Esophagus squamous epithelium (tissue), 5 donors: ENCODE measurements at regions of chr17 and their contacts with region 1.

Region 1: DNA sequence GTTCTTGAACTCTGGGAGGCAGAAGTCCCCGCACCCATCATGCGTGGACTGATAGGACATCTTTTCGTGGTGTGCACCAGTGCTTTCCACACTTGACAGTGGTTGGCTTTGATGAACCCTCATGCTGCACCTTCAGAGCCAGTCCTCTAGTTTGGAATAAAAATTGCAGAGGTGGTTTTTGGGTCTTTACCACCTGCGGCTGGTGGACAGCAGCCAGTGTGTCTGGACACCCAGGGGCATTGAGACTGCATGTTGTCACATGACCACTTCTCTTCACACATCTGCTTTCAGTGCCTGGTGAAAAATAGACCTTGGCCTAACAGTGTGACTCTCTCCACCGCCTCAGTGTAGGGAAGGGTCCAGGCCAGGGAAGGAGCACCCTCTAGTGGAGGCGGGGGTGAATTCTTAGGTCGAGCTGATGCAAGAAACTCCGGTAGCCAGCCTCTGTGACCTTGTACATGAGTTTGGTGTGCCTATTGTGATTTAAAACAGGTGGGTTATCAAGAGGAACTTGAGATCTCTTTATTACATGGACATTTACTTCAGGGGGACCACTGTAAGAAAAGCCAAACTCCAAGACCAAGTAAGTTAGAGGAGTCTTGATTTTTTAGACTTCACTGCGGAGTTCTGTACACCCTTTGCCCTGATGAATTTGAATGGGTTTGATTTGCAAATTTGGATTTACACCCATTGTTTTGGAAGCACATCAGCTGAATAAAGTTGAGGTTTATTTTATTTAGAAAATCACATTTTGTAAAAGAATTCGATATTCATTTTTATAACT is 17.9 kb downstream of the GOSR2 start:
- DNase-seq: peak; percentile 17
- H3K4me3 ChIP-seq: no peak overlapping the region
- H3K27ac ChIP-seq: no peak overlapping the region
- H3K4me1 ChIP-seq: peaks cover 14 to 35% (median 16%) of the 10 kb centered on the region in 3 donors
- H3K27me3 ChIP-seq: no peaks in the 10 kb centered on the region
- CTCF ChIP-seq: peak; percentile 65 to 79 (median 71)
- POLR2A ChIP-seq: no peak

Region 2: GRCh38 chr17:47009759-47010594 is 69.2 kb after region 1 on chr17:
- intact Hi-C with region 1: loop called (anchors 10 kb)
- DNase-seq: no peak
- H3K4me3 ChIP-seq: no peak overlapping the region
- H3K27ac ChIP-seq: no peak overlapping the region
- H3K4me1 ChIP-seq: no peaks in the 10 kb centered on the region
- H3K27me3 ChIP-seq: no peaks in the 10 kb centered on the region
- CTCF ChIP-seq: no peak
- POLR2A ChIP-seq: no peak

Region 3: DNA sequence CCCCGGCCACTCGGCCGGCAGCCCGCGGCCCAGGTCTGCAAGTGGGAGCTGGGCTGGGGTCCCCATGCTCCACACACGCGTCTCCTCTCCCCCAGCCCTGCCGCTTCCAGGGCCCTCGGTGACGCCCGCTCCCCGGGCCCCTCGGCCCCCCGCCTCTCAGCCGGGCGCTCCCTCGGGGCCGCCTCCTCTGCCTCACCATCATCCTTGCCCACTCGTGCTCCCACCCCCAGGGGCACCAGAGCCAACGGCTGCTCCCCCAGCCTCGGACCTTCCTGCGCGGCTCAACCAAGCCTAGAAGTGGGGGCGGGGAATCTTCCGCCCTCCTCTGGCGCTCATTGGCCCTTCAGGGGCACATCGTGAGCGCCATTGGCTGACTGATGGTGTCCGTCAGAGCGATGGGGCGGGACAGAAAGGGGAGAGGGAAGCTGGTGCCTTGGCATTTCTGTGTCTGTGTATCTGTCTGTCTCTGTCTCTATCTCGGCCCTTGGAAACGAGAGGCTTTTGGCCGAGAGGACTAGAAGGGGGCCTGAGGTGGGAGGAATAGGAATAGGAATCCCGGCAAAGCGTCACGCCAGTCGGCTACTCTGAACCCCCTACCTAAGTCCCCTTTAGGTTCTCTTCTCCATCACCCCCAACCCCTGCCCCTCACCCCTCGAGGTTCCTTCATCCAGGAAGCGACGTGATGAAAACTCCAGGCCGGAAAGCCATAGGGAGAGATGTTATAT is 159.3 kb after region 1 on chr17:
- intact Hi-C with region 1: no loop called
- DNase-seq: peak; percentile 44
- H3K4me3 ChIP-seq: peak overlapping the region; percentile 90 to 99 (median 98)
- H3K27ac ChIP-seq: peak overlapping the region; percentile 82 to 94 (median 90)
- H3K4me1 ChIP-seq: peaks cover 6 to 33% (median 8%) of the 10 kb centered on the region in 3 donors
- H3K27me3 ChIP-seq: no peaks in the 10 kb centered on the region
- CTCF ChIP-seq: no peak
- POLR2A ChIP-seq: peak in 2 of 4 donors; percentile 53 to 59